ENCODE measurements at regions of chr7 and their contacts with region 1.

Region 1: DNA sequence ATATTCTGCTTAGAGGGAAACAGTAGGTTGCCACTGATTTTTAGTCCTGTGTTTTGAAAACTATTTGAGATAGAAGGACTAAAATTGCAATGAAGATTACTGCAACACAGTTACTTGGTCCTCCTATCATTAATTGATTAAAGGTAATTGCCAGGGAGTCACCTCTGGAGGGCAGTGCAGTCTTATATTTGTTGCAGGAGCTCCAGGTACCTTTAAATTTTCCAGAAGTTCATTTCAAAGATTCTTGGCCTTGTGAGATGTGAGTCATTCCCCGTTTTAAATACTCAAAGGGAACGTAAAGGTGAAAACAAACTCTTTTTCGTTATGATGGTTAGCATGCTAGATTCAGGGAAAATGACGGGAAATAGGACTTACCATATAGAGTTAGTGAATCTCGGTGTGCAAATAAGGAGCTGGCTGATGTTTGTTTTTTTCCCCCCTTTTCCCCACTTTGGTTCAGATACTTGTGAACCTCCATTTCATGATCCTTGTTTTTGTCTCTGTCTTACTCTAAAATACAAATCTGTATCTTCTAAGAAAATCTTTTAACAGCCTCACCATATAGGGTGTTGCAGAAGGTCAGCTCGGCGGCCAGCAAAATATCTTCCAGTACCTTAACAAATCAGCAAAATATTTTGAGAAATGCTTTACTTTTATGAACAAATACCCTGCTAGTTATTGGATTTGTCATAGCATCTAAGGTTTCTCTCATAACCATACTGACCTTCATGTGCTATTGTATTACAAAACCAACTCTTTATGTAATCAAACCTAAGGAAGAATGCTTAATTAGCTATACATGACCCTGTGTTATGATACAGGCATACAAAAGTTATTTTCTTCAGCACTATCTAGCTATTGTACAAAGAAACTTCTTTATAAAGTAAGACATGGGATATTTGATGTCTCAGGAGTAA is 143.0 kb upstream of the HDAC9 start:
- DNase-seq: peak; percentile 45
- ATAC-seq: peak; percentile 63 to 67

Region 2: GRCh38 chr7:18495412-18496340 is 143.1 kb after region 1 on chr7 and contains the start of gene HDAC9:
- intact Hi-C with region 1: loop called in 1 of 2 experiments (anchors 10 kb)
- DNase-seq: peak; percentile 29
- ATAC-seq: peak; percentile 84 to 94
- total RNA-seq, gene HDAC9: 16.0 to 22.4 TPM

Region 3: GRCh38 chr7:18530224-18531179 is 177.9 kb after region 1 on chr7:
- intact Hi-C with region 1: no loop called
- DNase-seq: no peak
- ATAC-seq: no peak

Region 4: DNA sequence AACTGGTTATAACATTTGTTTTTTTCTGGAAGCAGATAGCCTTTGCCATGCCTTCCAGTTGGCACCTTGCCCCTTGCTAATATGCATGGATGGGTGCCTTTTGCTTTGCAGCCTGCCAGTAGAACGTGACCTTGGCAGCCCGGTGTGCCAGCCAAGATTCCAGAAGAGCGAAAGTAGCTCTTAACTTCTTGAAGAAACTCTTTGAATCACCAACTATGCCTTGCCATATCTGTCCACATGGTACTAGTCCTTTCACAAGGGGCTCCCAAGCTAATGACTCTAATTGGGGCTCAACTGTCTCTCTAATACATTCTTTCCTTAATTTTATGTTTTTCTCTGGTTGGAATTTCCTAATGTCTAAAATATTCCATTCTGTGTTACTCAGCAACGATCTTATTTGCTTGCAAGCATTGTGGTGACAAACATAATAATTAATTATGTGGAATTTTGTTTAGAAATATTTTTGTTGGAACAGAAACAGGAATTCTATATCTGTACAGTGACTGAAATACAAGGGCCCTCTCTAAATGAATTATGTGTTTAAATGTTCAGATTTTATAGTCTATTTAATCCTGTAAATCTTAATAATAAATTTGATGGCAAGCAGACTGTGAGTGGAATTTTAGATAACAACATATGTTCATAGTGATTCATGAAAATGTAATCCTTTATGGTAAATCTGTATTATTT is 188.7 kb after region 1 on chr7:
- intact Hi-C with region 1: no loop called
- DNase-seq: peak; percentile 52
- ATAC-seq: peak; percentile 54 to 88

Region 5: DNA sequence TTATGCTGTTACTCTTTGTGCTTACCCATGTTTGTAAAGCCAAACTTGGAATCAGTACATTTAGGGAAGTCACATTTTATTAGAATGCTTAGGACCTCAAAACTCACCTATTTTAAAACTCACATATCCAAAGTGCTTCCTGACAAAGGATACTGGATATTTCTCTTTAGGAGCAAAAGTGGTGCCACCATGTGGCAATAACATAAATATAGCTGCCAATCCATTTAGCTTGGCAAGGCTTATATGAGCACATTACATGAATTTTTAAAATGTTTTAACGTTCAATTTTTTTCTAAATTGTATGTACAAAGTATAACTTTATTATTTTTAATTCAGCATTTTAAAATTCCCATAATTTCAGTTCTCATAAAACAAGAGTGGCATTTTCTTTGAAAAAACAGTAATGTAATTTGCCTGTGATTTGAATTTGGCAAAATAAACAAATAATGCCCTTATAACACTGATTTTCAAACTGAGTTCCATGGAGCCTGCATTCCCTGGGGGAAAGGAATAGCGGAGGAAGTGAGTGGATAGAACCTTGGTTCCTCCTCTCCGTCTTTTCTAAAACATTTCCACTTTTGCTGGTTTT is 218.4 kb after region 1 on chr7:
- intact Hi-C with region 1: loop called (anchors 5 to 10 kb)
- DNase-seq: no peak
- ATAC-seq: no peak

Region 6: DNA sequence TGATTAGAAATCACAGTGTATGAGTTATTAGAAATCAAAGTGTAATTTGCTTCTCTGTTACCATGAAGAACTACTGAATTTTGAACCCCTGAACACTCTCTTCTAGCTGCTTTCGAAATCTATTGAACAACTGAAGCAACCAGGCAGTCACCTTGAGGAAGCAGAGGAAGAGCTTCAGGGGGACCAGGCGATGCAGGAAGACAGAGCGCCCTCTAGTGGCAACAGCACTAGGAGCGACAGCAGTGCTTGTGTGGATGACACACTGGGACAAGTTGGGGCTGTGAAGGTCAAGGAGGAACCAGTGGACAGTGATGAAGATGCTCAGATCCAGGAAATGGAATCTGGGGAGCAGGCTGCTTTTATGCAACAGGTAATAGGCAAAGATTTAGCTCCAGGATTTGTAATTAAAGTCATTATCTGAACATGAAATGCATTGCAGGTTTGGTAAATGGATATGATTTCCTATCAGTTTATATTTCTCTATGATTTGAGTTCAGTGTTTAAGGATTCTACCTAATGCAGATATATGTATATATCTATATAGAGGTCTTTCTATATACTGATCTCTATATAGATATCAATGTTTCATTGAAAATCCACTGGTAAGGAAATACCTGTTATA is 313.6 kb after region 1 on chr7:
- intact Hi-C with region 1: loop called (anchors 5 to 10 kb)
- DNase-seq: peak; percentile 81
- ATAC-seq: peak; percentile 91

Region 7: GRCh38 chr7:19665399-19666008 is 1312.9 kb after region 1 on chr7:
- intact Hi-C with region 1: loop called in 1 of 2 experiments (anchors 10 kb)
- DNase-seq: no peak
- ATAC-seq: no peak

Measured in left cardiac atrium (tissue), 4 donors.